ENCODE measurements at regions of chr1 and their contacts with region 1.

Region 1: DNA sequence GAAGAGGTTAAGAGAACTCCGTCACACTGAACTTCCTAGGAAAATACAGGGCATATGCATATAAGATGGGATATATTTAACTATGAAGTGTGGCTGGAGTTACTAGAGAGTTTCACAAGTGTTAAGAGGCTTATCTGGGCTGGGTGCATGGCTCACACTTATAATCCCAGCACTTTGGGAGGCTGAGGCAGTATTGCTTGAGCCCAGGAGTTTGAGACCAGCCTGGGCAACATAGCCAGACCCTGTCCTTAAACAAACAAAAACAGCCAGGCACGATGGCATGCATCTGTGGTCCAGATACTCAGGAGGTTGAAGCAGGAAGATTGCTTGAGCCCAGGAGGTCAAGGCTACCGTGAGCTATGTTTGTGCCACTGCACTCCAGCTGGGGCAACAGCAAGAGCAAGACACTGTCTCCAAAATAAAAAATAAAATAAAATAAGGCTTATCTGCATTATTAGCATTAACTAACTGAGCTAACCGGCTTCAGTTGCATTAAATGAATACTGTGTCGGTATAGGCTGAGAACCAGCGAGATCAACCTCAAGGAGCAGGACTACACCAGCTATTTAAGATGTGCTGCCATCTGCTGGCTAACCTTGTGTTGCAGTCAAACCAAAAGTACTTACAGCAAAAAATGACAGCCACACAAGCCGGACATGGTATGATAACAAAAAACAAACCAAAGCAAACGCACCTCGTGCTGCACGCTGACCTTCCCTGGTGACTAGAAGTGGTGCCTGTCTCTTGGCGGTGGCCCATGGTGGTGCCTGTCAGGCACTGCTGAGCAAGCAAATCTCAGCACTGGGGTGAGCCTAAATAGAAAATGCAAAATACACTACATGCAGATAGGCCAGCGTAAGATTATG is 19.7 kb upstream of the RBBP5 start:
- DNase-seq: peak; percentile 88
- ATAC-seq: peak; percentile 96
- H3K4me3 Mint-ChIP-seq: no peak overlapping the region
- H3K27ac Mint-ChIP-seq: no peak overlapping the region
- H3K4me1 Mint-ChIP-seq: peaks cover 3% of the 10 kb centered on the region
- H3K27me3 Mint-ChIP-seq: no peaks in the 10 kb centered on the region

Region 2: DNA sequence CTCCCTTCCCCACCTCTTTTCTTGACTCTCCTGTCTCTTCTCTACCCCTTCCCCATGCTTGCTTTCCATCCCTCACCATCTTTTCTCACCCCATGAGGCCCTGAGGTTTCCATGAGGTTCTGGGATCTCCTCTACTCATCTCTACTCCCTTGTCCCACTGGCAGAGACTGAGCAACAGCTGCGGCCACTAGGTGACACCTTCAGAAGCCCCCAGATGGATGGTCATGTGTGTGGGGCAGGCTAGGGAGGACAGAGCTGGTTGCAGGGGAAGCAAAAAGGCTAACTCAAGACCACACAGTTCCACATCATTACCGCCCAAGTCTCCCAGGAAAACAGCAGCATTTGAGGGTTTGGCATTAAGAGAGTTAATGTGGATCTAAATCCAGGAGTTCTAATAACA is 500.9 kb before region 1 on chr1:
- CTCF ChIA-PET with region 1: no interaction called
- POLR2A ChIA-PET with region 1: no interaction called
- intact Hi-C with region 1: no loop called
- DNase-seq: no peak
- ATAC-seq: no peak
- H3K4me3 Mint-ChIP-seq: no peak overlapping the region
- H3K27ac Mint-ChIP-seq: no peak overlapping the region
- H3K4me1 Mint-ChIP-seq: no peaks in the 10 kb centered on the region
- H3K27me3 Mint-ChIP-seq: peaks cover 8% of the 10 kb centered on the region

Region 3: GRCh38 chr1:204989266-204990058 is 152.0 kb before region 1 on chr1:
- CTCF ChIA-PET with region 1: interaction called, 18 read pairs
- POLR2A ChIA-PET with region 1: no interaction called
- intact Hi-C with region 1: loop called (anchors 1 kb)
- DNase-seq: peak; percentile 82
- ATAC-seq: peak; percentile 89
- H3K4me3 Mint-ChIP-seq: no peak overlapping the region
- H3K27ac Mint-ChIP-seq: no peak overlapping the region
- H3K4me1 Mint-ChIP-seq: peaks cover 11% of the 10 kb centered on the region
- H3K27me3 Mint-ChIP-seq: peaks cover 5% of the 10 kb centered on the region

Region 4: DNA sequence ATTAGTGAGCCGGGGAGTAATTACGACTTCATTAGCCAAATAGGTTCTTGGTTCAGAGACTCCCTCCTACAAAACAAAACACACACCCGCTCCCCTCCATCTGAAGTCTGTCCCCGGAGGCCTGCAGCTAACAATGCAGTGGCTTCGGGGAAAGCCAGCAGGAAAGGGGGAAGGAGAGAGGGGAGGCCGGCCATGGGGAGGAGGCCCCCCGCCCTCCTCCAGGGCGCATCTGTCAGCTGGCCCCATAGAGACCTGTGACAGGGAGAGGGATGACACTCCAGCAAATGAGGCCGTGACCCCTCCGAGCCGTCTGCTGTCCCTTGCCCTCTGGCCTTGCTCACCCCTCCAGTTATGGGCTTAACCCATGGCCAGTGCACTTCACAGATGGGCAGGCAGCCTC is 110.6 kb before region 1 on chr1:
- CTCF ChIA-PET with region 1: no interaction called
- POLR2A ChIA-PET with region 1: no interaction called
- intact Hi-C with region 1: no loop called
- DNase-seq: no peak
- ATAC-seq: no peak
- H3K4me3 Mint-ChIP-seq: no peak overlapping the region
- H3K27ac Mint-ChIP-seq: no peak overlapping the region
- H3K4me1 Mint-ChIP-seq: no peaks in the 10 kb centered on the region
- H3K27me3 Mint-ChIP-seq: no peaks in the 10 kb centered on the region

Region 5: GRCh38 chr1:205111354-205111753 is 30.1 kb before region 1 on chr1:
- CTCF ChIA-PET with region 1: interaction called, 27 read pairs
- POLR2A ChIA-PET with region 1: no interaction called
- intact Hi-C with region 1: no loop called
- DNase-seq: no peak
- ATAC-seq: peak; percentile 30
- H3K4me3 Mint-ChIP-seq: no peak overlapping the region
- H3K27ac Mint-ChIP-seq: peak overlapping the region; percentile 4
- H3K4me1 Mint-ChIP-seq: peaks cover 8% of the 10 kb centered on the region
- H3K27me3 Mint-ChIP-seq: no peaks in the 10 kb centered on the region

Region 6: GRCh38 chr1:205129447-205130029 is 11.9 kb before region 1 on chr1:
- CTCF ChIA-PET with region 1: interaction called, 16 read pairs
- POLR2A ChIA-PET with region 1: no interaction called
- intact Hi-C with region 1: no loop called
- DNase-seq: no peak
- ATAC-seq: no peak
- H3K4me3 Mint-ChIP-seq: no peak overlapping the region
- H3K27ac Mint-ChIP-seq: no peak overlapping the region
- H3K4me1 Mint-ChIP-seq: no peaks in the 10 kb centered on the region
- H3K27me3 Mint-ChIP-seq: no peaks in the 10 kb centered on the region

Measured in activated CD4-positive, alpha-beta T cell treated with anti-CD3 and anti-CD28 coated beads for 36 hours (primary cell).